Activated naive CD4-positive, alpha-beta T cell treated with anti-CD3 and anti-CD28 coated beads for 36 hours (primary cell): ENCODE measurements at regions of chr13 and their contacts with region 1.

Region 1: GRCh38 chr13:75803164-75803611 is 167.1 kb downstream of the LMO7 start:
- DNase-seq: peak; percentile 44
- H3K4me3 Mint-ChIP-seq: peak overlapping the region; percentile 35
- H3K27ac Mint-ChIP-seq: peak overlapping the region; percentile 48
- H3K4me1 Mint-ChIP-seq: peaks cover 51% of the 10 kb centered on the region
- H3K27me3 Mint-ChIP-seq: no peaks in the 10 kb centered on the region

Region 2: DNA sequence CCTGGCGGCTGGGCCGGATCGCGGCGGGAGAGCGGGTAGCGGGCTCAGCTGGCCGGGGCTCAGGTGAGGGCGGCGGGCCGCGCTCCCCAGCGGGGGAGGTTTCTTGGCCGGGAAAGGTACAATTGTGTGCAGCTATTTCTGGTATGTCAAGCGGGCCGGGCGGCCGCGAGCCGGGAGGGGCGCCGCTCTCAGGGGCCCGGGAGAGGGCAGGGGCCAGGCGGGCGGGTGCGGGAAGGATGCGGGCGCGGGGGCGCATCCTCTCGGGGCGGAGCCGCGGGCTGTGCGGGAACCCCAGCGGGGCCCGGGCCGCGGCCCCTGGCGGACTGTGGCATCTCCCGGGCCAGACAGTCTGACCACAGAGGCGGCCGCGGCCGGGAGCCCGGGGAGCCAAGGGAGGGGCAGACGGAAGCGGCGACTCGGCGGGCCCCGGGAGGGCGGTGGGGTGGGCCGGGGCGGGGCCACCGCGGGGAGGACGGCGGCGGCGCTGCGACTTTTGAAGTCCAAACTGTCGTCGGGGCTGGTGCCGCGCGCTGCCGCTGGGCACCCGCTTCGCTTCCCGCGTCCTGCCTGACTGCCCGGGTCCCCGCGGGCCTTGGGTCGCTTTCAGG is 167.3 kb before region 1 on chr13 and contains the start of gene LMO7:
- CTCF ChIA-PET with region 1: no interaction called
- intact Hi-C with region 1: loop called (anchors 5 kb)
- DNase-seq: peak; percentile 55
- H3K4me3 Mint-ChIP-seq: peak within 1 kb of the TSS; percentile 75
- H3K27ac Mint-ChIP-seq: no peak within 1 kb of the TSS
- H3K4me1 Mint-ChIP-seq: peaks cover 6% of the 10 kb centered on the region
- H3K27me3 Mint-ChIP-seq: peaks cover 12% of the 10 kb centered on the region
- total RNA-seq, gene LMO7: 10.5 to 12.0 TPM

Region 3: GRCh38 chr13:75704579-75705320 is 98.4 kb before region 1 on chr13:
- CTCF ChIA-PET with region 1: no interaction called
- intact Hi-C with region 1: loop called (anchors 1 kb)
- DNase-seq: no peak
- H3K4me3 Mint-ChIP-seq: no peak overlapping the region
- H3K27ac Mint-ChIP-seq: no peak overlapping the region
- H3K4me1 Mint-ChIP-seq: peaks cover 14% of the 10 kb centered on the region
- H3K27me3 Mint-ChIP-seq: no peaks in the 10 kb centered on the region

Region 4: GRCh38 chr13:75766636-75767035 is 36.6 kb before region 1 on chr13:
- CTCF ChIA-PET with region 1: interaction called, 18 read pairs
- intact Hi-C with region 1: loop called (anchors 1 kb)
- DNase-seq: peak; percentile 18
- H3K4me3 Mint-ChIP-seq: no peak overlapping the region
- H3K27ac Mint-ChIP-seq: peak overlapping the region; percentile 63
- H3K4me1 Mint-ChIP-seq: peaks cover 74% of the 10 kb centered on the region
- H3K27me3 Mint-ChIP-seq: peaks cover 4% of the 10 kb centered on the region

Region 5: GRCh38 chr13:75771818-75772217 is 31.4 kb before region 1 on chr13:
- CTCF ChIA-PET with region 1: no interaction called
- intact Hi-C with region 1: loop called (anchors 1 kb)
- DNase-seq: no peak
- H3K4me3 Mint-ChIP-seq: no peak overlapping the region
- H3K27ac Mint-ChIP-seq: no peak overlapping the region
- H3K4me1 Mint-ChIP-seq: peaks cover 49% of the 10 kb centered on the region
- H3K27me3 Mint-ChIP-seq: no peaks in the 10 kb centered on the region

Region 6: DNA sequence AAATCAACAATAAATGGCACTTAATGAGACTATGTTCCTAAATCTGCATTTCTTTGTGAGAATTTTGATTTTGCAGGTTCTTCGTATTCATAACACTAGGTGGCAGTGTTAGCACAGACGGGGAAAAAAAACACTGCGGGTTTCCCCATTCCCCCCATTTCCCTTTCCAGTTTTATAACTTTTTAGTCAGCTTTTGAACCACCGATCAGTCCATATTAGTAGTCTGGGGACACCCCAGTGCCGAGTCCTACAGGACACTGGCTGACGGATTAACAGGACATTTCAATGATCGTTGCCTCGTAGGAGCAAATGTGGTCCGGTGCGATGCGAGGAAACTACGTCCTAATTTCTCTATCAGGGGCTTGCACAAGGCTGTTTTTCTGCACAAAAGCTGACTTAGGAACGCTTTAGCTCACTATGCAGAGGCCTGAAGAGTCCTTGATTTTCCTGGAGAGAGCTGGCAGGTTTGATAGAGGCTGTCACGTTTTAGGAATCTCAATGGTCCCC is 67.3 kb after region 1 on chr13:
- CTCF ChIA-PET with region 1: interaction called, 11 read pairs
- intact Hi-C with region 1: loop called (anchors 2 kb)
- DNase-seq: peak; percentile 15
- H3K4me3 Mint-ChIP-seq: peak overlapping the region; percentile 40
- H3K27ac Mint-ChIP-seq: no peak overlapping the region
- H3K4me1 Mint-ChIP-seq: peaks cover 16% of the 10 kb centered on the region
- H3K27me3 Mint-ChIP-seq: peaks cover 5% of the 10 kb centered on the region